Activated CD4-positive, alpha-beta memory T cell treated with anti-CD3 and anti-CD28 coated beads for 36 hours (primary cell): ENCODE measurements at regions of chr15 and their contacts with region 1.

Region 1: GRCh38 chr15:85296615-85297402 is 83.6 kb upstream of the AKAP13 start:
- DNase-seq: peak; percentile 77
- H3K4me3 Mint-ChIP-seq: peak overlapping the region; percentile 52
- H3K27ac Mint-ChIP-seq: no peak overlapping the region
- H3K4me1 Mint-ChIP-seq: peaks cover 12% of the 10 kb centered on the region
- H3K27me3 Mint-ChIP-seq: no peaks in the 10 kb centered on the region

Region 2: DNA sequence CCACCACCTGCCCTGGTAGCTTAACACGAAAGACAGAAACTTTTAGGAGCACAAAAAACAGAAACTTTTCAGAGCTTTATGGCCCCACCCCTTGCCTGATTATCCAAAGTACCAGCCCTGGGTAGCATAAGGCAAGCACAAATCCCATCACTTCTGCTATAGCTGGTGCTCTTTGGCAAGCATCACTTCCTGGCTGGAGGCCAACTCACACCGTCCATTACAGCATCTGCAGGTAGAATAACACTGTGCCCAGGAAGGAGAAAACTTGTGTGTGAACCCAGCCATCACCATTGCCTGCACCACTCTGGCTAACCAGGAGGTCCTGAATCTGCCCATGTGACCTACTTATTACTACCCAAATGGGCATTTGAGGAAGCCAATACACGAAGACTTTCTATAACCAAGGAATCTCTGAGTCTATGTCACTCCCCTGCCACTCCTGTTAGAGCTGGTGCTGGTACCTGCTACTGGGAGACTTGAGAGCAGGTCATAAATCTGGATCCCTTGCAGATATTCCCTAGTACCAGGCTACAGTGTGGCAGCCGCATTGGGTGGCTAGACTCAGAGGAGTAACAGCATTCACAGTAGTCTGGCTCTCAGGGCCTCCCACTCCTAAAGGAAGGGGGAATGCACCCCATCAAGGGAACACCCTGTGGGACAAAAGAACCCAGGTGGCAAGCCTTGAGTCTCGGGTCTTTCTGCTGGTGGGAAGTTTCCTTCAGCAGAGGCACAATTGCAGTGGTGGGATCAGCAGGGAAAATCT is 10.3 kb after region 1 on chr15:
- CTCF ChIA-PET with region 1: interaction called, 11 read pairs
- POLR2A ChIA-PET with region 1: no interaction called
- intact Hi-C with region 1: no loop called
- DNase-seq: no peak
- H3K4me3 Mint-ChIP-seq: no peak overlapping the region
- H3K27ac Mint-ChIP-seq: no peak overlapping the region
- H3K4me1 Mint-ChIP-seq: peaks cover 12% of the 10 kb centered on the region
- H3K27me3 Mint-ChIP-seq: no peaks in the 10 kb centered on the region

Region 3: DNA sequence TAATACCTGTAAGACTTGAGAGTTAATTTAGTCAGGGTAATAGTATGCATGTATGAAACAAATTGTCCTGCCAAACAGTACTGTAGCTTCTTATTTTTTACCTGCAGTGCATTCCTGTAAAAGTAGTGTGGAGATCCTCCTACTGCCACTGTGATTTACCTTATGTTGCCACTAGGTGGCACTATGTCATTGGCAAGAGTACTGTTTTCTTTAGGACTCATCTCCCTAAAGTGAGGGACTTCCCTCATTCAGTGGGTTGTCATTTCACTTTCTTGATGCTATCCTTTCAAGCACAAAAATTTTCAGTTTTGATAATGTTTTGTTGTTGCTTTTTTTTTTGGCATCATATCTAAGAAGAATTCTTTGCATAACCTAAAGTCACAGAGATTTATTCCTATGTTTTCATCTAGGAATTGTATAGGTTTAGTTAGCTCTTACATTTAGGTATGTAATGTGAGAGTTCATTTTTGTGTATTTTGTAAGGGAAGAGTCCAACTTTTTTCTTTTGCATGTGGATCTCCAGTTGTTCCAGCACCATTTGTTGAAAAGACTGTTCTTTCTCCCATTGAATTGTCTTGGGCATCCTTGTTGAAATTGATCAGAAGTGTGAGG is 189.3 kb after region 1 on chr15:
- CTCF ChIA-PET with region 1: interaction called, 9 read pairs
- POLR2A ChIA-PET with region 1: interaction called, 3 read pairs
- intact Hi-C with region 1: loop called (anchors 5 kb)
- DNase-seq: peak; percentile 41
- H3K4me3 Mint-ChIP-seq: no peak overlapping the region
- H3K27ac Mint-ChIP-seq: peak overlapping the region; percentile 32
- H3K4me1 Mint-ChIP-seq: peaks cover 69% of the 10 kb centered on the region
- H3K27me3 Mint-ChIP-seq: no peaks in the 10 kb centered on the region

Region 4: GRCh38 chr15:85831415-85832113 is 534.8 kb after region 1 on chr15:
- CTCF ChIA-PET with region 1: interaction called, 6 read pairs
- POLR2A ChIA-PET with region 1: no interaction called
- intact Hi-C with region 1: loop called (anchors 10 kb)
- DNase-seq: peak; percentile 56
- H3K4me3 Mint-ChIP-seq: no peak overlapping the region
- H3K27ac Mint-ChIP-seq: no peak overlapping the region
- H3K4me1 Mint-ChIP-seq: no peaks in the 10 kb centered on the region
- H3K27me3 Mint-ChIP-seq: peaks cover 3% of the 10 kb centered on the region